AG04450 (cell line): ENCODE measurements at regions of chr19 and their contacts with region 1.

Region 1: DNA sequence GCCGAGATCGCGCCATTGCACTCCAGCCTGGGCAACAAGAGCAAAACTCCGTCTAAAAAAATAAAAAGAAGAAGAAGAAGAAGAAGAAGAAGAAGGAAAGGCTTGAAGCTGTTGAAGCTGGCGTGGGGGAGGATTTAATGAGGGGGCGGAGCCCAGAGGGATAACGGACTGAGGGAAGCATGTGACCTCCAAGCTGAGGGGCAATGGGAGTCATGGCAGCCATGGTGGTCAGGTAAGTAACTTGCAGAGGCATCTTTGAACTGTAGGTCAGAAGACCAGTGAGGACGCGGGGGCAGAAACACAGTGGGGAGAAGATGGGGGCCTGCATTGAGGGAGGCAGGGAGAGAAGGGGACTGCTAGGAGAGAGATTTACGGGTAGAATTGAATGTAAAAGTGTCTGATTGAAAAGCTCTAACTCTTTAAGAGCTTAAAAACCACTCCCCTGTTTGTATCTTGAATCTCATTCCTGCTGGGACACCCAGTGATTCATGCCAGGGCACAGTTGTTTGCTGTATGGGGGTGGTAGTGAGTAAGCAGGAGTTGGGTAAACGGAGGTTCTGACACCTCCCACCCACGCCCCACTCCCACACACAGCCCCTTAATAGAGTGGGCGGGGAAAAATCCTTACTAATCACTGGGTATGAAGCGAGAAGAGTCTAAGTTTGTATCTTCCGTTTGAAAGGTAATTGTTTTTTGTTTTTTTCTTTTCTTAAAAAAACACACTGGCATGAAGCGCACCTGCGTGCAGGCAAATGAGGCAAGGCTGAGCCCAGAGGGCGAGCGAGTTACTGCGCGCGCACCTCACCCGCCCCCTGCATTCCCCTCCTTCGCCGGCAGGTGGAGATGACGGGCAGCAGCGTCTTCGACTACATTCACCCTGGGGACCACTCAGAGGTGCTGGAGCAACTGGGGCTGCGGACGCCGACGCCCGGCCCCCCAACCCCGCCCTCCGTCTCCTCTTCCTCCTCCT is 13.0 kb downstream of the TMEM160 start:
- DNase-seq: peak; percentile 47
- H3K4me3 ChIP-seq: peak overlapping the region; percentile 58
- H3K27ac ChIP-seq: peak overlapping the region; percentile 31
- H3K27me3 ChIP-seq: no peaks in the 10 kb centered on the region
- CTCF ChIP-seq: peak; percentile 91

Region 2: DNA sequence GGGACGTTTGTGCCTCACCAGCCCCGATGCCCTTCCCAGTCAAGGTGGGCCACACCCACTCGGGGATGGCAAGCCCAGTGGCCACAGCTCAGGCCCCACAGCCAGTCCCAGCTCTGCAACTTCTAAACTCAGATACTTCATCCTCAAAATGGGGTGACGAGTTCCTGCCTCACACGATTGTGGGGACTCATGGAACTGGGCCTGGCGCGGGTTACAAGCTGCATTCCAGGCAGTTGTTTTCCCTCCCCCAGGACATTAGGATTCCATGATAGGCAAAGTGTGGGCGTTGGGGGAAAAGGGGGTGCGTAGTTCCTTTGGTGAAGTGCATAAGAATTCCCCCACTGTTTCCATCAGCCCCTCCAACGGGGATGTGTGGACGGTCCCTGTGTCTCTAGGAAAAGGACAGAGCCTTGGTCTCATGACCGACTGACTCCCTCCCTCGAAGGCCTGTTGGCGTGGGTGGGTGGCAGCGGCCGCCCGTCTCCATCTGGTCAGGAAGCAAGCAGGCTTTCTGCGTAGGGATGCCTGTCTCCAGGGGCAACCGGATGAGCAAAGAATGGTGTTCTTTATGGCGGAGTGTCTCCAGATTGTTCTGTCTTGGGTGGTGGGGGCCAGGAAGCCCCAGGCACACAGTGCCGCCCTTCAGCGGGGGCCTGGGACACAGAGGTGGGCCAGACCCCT is 36.8 kb before region 1 on chr19:
- CTCF ChIA-PET with region 1: no interaction called
- POLR2A ChIA-PET with region 1: no interaction called
- DNase-seq: no peak
- H3K4me3 ChIP-seq: no peak overlapping the region
- H3K27ac ChIP-seq: no peak overlapping the region
- H3K27me3 ChIP-seq: no peaks in the 10 kb centered on the region
- CTCF ChIP-seq: no peak

Region 3: DNA sequence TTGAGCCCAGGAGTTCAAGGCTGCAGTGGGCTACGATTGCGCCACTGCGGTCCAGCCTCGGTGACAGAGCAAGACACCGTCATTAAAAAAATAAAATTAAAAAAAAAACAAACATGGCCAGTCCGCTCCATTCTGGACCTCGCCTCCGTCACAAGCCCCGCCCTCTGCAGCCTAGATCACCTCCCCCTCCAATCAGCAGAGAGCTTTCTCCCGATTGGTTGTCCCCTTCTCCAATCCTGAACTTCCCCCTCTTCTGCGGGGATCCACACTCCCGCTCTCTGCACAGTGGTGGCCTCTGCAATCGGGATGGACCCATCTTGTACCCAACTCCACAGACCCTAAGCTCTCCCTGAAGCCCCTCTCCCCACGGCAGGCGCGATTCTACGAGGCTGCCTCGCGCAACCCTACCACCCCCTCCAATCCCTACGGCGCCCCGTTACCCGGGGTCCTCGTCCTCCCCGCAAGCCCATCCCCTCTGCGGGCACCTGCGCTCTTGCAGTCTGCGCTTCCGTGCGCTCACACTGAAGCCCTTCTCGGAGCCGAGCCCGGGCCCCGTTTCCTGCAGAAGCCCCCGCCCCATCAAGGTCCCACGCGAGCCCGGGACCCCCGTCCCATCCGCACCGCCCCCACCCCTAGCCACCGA is 12.5 kb after region 1 on chr19:
- CTCF ChIA-PET with region 1: interaction called, 10 read pairs
- POLR2A ChIA-PET with region 1: no interaction called
- DNase-seq: peak; percentile 74
- H3K4me3 ChIP-seq: peak overlapping the region; percentile 76
- H3K27ac ChIP-seq: no peak overlapping the region
- H3K27me3 ChIP-seq: no peaks in the 10 kb centered on the region
- CTCF ChIP-seq: no peak

Region 4: DNA sequence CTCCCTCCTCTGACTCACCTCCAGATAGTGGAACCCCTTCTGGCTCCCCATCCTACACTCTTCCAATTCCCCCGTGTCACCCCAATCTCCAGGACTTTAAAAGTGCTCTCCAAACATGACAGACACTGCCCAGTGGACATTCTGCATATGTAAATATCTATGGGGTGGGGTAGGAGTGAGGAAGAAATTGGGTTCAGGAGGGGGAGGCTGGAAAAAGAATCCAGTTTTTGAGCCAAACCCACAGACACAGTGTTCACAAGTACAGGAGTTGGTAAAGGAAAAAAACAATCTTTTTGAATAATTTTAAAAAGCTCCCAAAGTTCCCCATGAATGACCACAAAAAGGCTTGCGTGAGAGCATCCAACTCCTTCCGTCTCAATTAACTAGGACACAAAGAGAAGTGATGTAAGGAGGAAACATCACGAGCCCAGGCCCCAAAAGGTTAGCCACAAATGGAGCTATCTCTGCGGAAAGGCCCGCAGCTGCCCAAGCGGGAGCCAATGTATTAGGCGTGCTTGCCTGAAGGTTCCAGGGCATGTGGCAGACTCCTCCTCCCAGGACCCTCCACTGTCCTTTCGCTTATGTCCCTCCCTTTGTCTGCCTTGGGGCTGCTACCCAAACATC is 60.2 kb after region 1 on chr19:
- CTCF ChIA-PET with region 1: no interaction called
- POLR2A ChIA-PET with region 1: no interaction called
- DNase-seq: no peak
- H3K4me3 ChIP-seq: no peak overlapping the region
- H3K27ac ChIP-seq: peak overlapping the region; percentile 11
- H3K27me3 ChIP-seq: no peaks in the 10 kb centered on the region
- CTCF ChIP-seq: no peak

Region 5: GRCh38 chr19:47124937-47125668 is 89.7 kb after region 1 on chr19:
- CTCF ChIA-PET with region 1: interaction called, 13 read pairs
- POLR2A ChIA-PET with region 1: no interaction called
- DNase-seq: no peak
- H3K4me3 ChIP-seq: no peak overlapping the region
- H3K27ac ChIP-seq: no peak overlapping the region
- H3K27me3 ChIP-seq: no peaks in the 10 kb centered on the region
- CTCF ChIP-seq: peak; percentile 76

Region 6: DNA sequence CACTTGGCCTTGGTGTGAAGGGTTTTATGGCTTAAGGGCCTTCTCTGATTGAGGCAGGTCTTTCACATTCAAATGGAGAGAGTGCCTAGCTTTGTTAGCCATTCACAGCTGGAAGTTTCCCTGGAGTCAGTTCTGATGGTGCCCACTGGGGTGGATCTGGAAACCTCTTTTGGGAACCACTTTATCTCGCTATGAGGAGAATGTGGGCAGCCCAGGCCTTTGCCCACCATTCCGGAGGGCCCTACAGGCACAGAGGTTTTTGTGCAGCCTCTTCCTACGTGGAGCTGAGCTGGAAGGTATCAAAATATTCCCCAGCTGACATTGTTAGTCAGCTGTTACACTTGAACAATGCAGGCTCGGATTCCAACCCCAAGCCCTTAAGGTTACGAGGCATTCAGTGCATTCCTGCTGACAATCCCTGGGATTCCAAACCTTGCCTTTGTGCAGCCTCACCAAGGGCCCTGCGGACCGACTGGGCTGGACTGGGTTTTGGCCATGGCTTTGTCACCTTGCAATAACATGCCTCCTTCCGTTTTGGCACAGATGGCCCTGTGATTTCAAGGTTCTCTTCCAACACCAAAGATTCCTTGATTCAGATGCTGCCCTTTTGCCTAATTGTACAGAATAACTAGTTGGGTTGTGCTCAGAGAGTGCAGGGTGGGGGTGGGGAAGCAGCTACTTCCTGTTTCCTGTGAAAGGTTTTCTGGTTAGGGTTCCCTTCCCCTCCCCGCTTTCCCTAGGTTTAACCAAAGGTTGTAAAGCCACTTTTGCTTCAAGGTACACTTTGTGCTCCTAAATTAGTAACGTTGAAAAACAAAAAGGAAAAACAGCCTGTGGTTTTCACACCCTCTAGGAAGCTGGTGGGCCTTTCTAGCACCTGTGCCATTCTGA is 122.3 kb after region 1 on chr19:
- CTCF ChIA-PET with region 1: no interaction called
- POLR2A ChIA-PET with region 1: no interaction called
- DNase-seq: peak; percentile 50
- H3K4me3 ChIP-seq: no peak overlapping the region
- H3K27ac ChIP-seq: peak overlapping the region; percentile 69
- H3K27me3 ChIP-seq: no peaks in the 10 kb centered on the region
- CTCF ChIP-seq: 0 out of 2 replicates have a peak, but pooled peaks have one; percentile 5